ENCODE measurements at regions of chr11 and their contacts with region 1.

Region 1: DNA sequence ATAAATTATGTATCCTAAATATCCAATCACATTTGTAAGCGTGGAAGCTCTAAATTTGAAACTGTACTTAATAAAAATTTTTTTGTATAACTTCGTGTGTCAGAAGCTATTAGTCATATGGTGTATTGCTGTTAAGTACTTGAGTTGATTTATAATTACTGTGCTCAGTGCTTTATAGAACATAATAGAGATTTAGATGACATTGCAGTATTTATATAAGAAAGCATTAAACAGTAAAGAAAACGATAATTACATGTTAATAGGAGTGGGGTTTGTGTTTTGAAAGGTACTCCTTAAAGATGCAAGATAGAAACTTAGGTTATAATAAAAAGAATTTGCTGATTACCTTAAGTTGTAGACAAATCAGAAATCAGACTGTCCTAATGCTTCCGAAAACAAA is 5.9 kb upstream of the TCP11L1 start:
- DNase-seq: no peak
- ATAC-seq: no peak
- H3K4me3 ChIP-seq: no peak overlapping the region
- H3K27ac ChIP-seq: no peak overlapping the region
- H3K4me1 ChIP-seq: peaks cover 0 to under 1% (median 0%) of the 10 kb centered on the region in 9 donors
- H3K27me3 ChIP-seq: peaks cover 0 to 4% (median 0%) of the 10 kb centered on the region in 7 donors
- CTCF ChIP-seq: no peak

Region 2: GRCh38 chr11:32466279-32466915 is 567.1 kb before region 1 on chr11:
- intact Hi-C with region 1: no loop called
- DNase-seq: no peak
- ATAC-seq: peak in 1 of 8 donors; percentile 27
- H3K4me3 ChIP-seq: no peak overlapping the region
- H3K27ac ChIP-seq: no peak overlapping the region
- H3K4me1 ChIP-seq: no peaks in the 10 kb centered on the region
- H3K27me3 ChIP-seq: no peaks in the 10 kb centered on the region
- CTCF ChIP-seq: no peak

Region 3: GRCh38 chr11:32918427-32918826 is 115.1 kb before region 1 on chr11:
- intact Hi-C with region 1: no loop called
- DNase-seq: no peak
- ATAC-seq: no peak
- H3K4me3 ChIP-seq: no peak overlapping the region
- H3K27ac ChIP-seq: no peak overlapping the region
- H3K4me1 ChIP-seq: peaks cover 0 to 3% (median 0%) of the 10 kb centered on the region in 9 donors
- H3K27me3 ChIP-seq: no peaks in the 10 kb centered on the region
- CTCF ChIP-seq: no peak

Region 4: GRCh38 chr11:33045551-33046255 is 12.2 kb after region 1 on chr11:
- intact Hi-C with region 1: loop called in 1 of 10 experiments (anchors 1 kb)
- DNase-seq: no peak
- ATAC-seq: no peak
- H3K4me3 ChIP-seq: no peak overlapping the region
- H3K27ac ChIP-seq: no peak overlapping the region
- H3K4me1 ChIP-seq: peaks cover 0 to 23% (median 6%) of the 10 kb centered on the region in 9 donors
- H3K27me3 ChIP-seq: no peaks in the 10 kb centered on the region
- CTCF ChIP-seq: no peak

Region 5: DNA sequence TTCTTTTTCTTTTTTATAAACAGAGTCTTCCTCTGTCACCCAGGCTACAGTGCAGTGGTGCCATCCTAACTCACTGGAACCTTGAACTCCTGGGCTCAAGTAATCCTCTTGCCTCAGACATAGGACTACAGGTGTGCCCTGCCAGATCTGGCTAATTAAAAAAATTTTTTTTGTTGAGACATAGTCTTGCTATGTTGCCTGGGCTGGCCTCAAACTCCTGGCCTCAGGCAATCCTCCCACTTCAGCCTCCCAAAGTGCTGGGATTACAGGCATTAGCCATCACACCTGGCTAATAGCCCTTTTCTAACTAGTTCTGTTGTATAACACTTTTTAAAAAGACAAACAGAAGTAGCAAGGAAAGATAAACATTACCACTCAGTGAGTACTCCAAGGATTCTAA is 70.3 kb after region 1 on chr11:
- intact Hi-C with region 1: no loop called
- DNase-seq: no peak
- ATAC-seq: no peak
- H3K4me3 ChIP-seq: no peak overlapping the region
- H3K27ac ChIP-seq: no peak overlapping the region
- H3K4me1 ChIP-seq: no peaks in the 10 kb centered on the region
- H3K27me3 ChIP-seq: no peaks in the 10 kb centered on the region
- CTCF ChIP-seq: no peak

Region 6: DNA sequence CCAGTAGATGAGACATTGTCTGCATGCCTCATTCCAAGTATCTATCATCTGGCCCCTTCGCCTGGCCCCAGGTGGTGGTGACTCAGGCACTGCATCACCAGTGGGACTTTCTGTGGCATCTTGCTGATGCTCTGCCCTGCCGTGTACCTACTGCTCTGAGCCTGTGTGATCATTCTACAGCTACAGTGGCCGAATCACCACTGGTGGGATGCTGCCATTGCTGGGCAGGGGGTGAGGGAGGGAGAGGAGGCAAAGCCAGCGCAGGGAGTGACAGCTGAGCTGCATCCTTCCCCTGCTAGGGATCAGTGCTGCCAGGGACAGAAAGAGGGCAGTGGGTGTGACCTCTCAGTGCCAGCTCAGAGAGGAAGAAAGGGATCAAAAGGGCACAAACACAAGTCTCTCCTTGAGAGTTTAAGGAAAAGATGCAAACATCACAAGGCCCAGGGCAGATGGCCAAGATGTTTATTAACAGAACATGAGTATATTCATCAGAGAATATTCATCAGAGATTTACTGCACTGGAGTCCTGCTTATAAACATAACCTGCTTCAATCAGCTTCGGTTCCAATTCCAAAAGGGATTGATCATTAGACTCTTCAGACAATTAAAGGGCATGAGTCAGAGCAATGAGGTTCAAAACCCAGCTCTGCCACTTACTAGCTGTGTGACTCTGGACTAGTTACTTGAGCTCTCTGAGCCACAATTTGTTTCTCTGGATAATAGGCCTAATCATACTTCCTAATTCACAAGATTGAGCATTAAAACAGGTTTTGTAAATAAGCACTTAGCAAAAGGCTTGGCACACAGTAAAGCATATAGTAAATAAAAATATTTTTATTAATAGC is 1181.7 kb after region 1 on chr11:
- intact Hi-C with region 1: loop called in 1 of 10 experiments (anchors 5 kb)
- DNase-seq: no peak
- ATAC-seq: no peak
- H3K4me3 ChIP-seq: no peak overlapping the region
- H3K27ac ChIP-seq: no peak overlapping the region
- H3K4me1 ChIP-seq: peaks cover 0 to 22% (median 9%) of the 10 kb centered on the region in 9 donors
- H3K27me3 ChIP-seq: no peaks in the 10 kb centered on the region
- CTCF ChIP-seq: no peak